ENCODE measurements at regions of chr10 and their contacts with region 1.

Region 1: GRCh38 chr10:98910048-98910447 is 325.6 kb downstream of the HPSE2 start:
- DNase-seq: no peak
- ATAC-seq: no peak
- H3K4me3 Mint-ChIP-seq: no peak overlapping the region
- H3K27ac Mint-ChIP-seq: no peak overlapping the region
- H3K4me1 Mint-ChIP-seq: no peaks in the 10 kb centered on the region
- H3K27me3 Mint-ChIP-seq: no peaks in the 10 kb centered on the region

Region 2: GRCh38 chr10:98886686-98887085 is 23.4 kb before region 1 on chr10:
- CTCF ChIA-PET with region 1: no interaction called
- POLR2A ChIA-PET with region 1: no interaction called
- intact Hi-C with region 1: no loop called
- DNase-seq: no peak
- ATAC-seq: no peak
- H3K4me3 Mint-ChIP-seq: no peak overlapping the region
- H3K27ac Mint-ChIP-seq: no peak overlapping the region
- H3K4me1 Mint-ChIP-seq: no peaks in the 10 kb centered on the region
- H3K27me3 Mint-ChIP-seq: no peaks in the 10 kb centered on the region

Region 3: GRCh38 chr10:98949911-98950505 is 40.0 kb after region 1 on chr10:
- CTCF ChIA-PET with region 1: no interaction called
- POLR2A ChIA-PET with region 1: no interaction called
- intact Hi-C with region 1: loop called in 1 of 2 experiments (anchors 5 kb)
- DNase-seq: no peak
- ATAC-seq: no peak
- H3K4me3 Mint-ChIP-seq: no peak overlapping the region
- H3K27ac Mint-ChIP-seq: no peak overlapping the region
- H3K4me1 Mint-ChIP-seq: no peaks in the 10 kb centered on the region
- H3K27me3 Mint-ChIP-seq: no peaks in the 10 kb centered on the region